CD14-positive monocyte (primary cell): ENCODE measurements at regions of chr1 and their contacts with region 1.

Region 1: DNA sequence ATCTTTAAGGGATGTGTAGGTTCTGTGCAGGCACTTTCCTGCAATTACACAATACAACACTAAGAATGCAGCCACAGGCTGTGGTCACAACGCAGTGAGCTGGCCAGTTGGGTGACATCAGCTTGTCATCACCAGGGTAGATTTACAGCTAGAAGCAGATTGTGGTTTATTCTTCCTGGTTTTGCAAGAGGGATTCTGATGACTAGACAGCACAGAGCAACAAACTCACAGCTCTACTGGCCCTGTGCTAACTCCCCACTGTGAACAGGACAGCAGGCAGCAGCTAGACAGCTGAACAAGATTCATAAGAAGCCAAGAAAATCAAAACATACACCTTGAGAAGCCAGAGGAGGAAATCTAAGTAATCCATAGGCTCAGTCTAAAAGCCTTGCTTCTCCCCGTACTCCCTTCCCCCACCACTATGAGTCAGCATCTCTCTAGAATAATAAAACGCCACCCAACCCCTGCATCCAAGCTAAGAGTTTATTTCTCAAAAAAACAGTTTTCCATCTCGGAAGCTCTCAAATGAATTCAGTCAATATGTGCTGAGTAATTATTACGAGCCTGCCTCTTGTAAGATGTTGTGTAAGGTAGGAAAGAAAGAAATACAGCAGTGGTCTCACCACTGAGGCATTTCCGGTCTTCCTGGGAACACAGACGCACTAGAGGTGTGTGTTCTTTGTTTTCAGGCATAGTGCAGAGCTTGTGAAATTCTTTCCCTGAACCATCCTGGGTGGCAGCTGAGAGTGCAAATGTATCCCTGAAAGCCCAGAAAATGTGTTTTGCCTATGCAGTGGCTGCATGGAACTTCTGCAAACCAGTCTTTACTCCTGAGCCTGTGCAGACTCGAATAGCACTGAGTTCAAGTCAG is 162.8 kb downstream of the NTPCR start:
- DNase-seq: peak; percentile 96 to 99 (median 99)
- H3K4me3 ChIP-seq: peak overlapping the region; percentile 31 to 68 (median 62)
- H3K4me3 Mint-ChIP-seq: peak overlapping the region; percentile 62 to 88
- H3K27ac ChIP-seq: peak overlapping the region; percentile 84 to 94
- H3K27ac Mint-ChIP-seq: peak overlapping the region; percentile 99 to 100 (median 99)
- H3K4me1 ChIP-seq: peaks cover 39 to 43% of the 10 kb centered on the region in 2 donors
- H3K4me1 Mint-ChIP-seq: peaks cover 47% of the 10 kb centered on the region
- H3K27me3 ChIP-seq: no peaks in the 10 kb centered on the region
- H3K27me3 Mint-ChIP-seq: peaks cover 0 to 6% (median 0%) of the 10 kb centered on the region in 3 donors
- CTCF ChIP-seq: no peak

Region 2: DNA sequence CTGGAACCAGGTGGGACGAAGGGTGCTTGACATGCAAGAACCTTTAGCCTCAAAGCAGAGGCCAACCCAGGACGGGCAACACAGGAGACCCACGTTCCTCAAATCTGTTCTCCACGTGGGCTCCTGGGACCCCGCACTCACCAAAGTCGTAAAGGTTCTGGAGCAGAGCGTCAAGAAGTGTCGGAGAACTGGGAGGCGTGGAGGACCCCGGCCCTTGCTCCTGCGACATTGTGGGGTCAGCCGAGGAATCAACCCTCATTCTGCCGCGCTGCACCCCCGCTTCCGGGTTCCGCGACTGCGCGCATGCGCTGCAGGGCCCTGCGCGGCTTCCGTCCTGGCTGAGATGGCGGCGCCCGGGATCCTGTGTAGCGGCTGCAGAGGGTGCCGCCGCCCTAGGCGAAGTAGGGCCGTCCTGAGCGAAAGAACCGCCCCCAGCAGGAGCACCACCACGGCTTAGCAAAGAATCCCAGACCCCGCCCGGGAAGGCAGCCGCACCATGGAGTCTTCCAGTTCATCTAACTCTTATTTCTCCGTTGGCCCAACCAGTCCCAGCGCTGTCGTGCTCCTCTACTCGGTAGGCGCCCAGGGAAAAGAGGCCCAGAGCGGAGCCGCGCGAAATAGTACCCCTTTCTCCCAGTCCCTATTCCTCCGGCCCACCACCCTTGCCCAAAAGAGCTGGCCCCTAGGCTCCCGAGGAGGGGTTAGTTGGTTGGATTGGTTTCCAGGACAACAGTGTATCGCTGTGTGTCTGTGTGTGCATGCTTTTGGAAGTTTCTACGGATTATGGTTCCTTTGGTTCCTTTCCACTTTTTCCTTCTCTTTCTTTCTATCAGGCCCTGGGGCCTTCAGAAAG is 1872.1 kb before region 1 on chr1 and contains the start of gene GNPAT:
- intact Hi-C with region 1: loop called in 1 of 2 experiments (anchors 10 kb)
- DNase-seq: peak; percentile 78 to 82 (median 81)
- H3K4me3 ChIP-seq: peak within 1 kb of the TSS; percentile 78 to 95 (median 94)
- H3K4me3 Mint-ChIP-seq: peak within 1 kb of the TSS; percentile 92 to 97
- H3K27ac ChIP-seq: peak within 1 kb of the TSS; percentile 54 to 95
- H3K27ac Mint-ChIP-seq: peak within 1 kb of the TSS; percentile 94 to 98 (median 97)
- H3K4me1 ChIP-seq: peaks cover 30 to 34% of the 10 kb centered on the region in 2 donors
- H3K4me1 Mint-ChIP-seq: peaks cover 60% of the 10 kb centered on the region
- H3K27me3 ChIP-seq: no peaks in the 10 kb centered on the region
- H3K27me3 Mint-ChIP-seq: peaks cover 0 to 2% (median 0%) of the 10 kb centered on the region in 3 donors
- CTCF ChIP-seq: no peak
- polyA plus RNA-seq, gene GNPAT: 20.8 to 40.3 (median 34.8) TPM

Region 3: DNA sequence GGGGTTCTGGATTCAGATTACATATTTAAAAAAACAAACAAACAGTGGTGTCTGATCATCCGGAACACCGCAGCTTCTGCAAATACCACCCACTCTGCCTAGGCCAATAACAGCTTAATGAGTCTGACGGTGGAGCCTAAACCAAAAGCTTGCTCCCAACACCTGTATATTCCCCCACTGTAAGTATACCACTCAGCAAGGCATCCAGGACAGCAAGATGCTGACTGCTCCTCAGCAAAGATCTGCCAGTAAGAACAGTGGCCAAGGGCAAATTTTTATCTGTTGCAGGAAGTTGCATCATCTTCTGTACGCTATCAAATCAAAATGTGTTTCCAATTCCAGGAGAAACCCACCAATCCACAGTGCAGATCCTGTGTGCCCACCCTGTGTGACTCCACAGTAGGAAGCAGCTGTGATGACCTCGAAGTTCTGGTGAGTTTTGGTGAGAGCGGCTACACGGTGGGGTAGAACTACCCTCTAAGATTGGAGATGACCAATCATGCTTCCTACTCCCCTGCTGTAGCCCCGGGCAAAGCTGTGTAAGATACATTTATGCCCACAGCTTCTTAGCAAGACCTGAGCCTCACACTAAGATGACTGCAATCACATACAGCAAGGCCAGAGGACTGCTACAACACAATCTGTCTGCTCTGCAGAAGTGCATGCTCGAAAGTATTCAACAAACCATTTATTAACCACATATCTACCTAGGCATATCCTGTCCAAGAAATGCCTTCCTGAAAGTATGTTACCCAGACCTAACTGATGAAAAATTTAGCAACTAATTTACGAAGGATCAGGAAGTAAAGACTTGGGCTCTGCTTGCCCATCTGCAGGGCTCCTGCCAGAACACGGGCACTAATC is 513.8 kb before region 1 on chr1:
- intact Hi-C with region 1: loop called in 1 of 2 experiments (anchors 10 kb)
- DNase-seq: no peak
- H3K4me3 ChIP-seq: peak overlapping the region in 1 of 3 experiments; percentile 44
- H3K4me3 Mint-ChIP-seq: peak overlapping the region in 1 of 2 donors; percentile 70
- H3K27ac ChIP-seq: peak overlapping the region in 1 of 2 donors; percentile 54
- H3K27ac Mint-ChIP-seq: peak overlapping the region; percentile 27 to 60 (median 51)
- H3K4me1 ChIP-seq: peaks cover 29 to 34% of the 10 kb centered on the region in 2 donors
- H3K4me1 Mint-ChIP-seq: peaks cover 44% of the 10 kb centered on the region
- H3K27me3 ChIP-seq: no peaks in the 10 kb centered on the region
- H3K27me3 Mint-ChIP-seq: peaks cover 0 to 1% (median 0%) of the 10 kb centered on the region in 3 donors
- CTCF ChIP-seq: no peak

Region 4: DNA sequence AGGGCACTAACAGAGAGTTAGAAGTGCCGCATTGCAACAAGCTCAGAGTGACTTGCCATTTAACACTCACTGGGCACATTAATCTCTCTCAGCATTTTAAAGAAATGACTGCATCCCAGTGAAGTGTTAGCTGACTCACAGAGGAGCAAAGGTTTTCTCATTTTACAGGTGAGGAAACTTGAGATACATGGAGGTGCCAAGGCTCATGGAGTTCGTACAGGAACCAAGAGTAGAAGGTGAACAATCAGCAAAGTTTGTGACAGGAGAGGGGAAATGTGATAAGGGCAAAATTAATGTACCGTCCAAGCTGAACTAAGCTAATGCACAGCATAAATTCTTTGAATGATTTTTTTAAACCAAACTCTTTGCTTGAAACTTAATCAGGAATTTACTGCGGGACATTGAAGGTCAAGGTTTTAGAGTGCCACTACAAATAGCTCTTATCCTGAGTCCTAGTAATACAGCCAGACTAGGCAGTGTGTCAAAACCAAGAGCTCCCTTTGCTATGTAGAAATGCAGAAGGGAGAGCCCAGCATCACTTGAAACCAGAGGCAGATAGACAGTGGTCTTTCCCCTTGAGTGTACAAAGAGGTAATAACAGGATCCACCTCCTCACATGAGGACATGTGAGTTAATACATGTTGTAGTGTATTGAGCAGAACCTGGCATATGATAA is 185.3 kb before region 1 on chr1:
- intact Hi-C with region 1: no loop called
- DNase-seq: no peak
- H3K4me3 ChIP-seq: no peak overlapping the region
- H3K4me3 Mint-ChIP-seq: no peak overlapping the region
- H3K27ac ChIP-seq: no peak overlapping the region
- H3K27ac Mint-ChIP-seq: no peak overlapping the region
- H3K4me1 ChIP-seq: peaks cover 7 to 9% of the 10 kb centered on the region in 2 donors
- H3K4me1 Mint-ChIP-seq: peaks cover 8% of the 10 kb centered on the region
- H3K27me3 ChIP-seq: no peaks in the 10 kb centered on the region
- H3K27me3 Mint-ChIP-seq: no peaks in the 10 kb centered on the region
- CTCF ChIP-seq: no peak